ENCODE measurements at regions of chr16 and their contacts with region 1.

Region 1: GRCh38 chr16:68264128-68265077 is at the start of gene SLC7A6:
- DNase-seq: peak; percentile 78 to 90 (median 84)
- ATAC-seq: peak; percentile 21 to 80 (median 69)
- H3K4me3 ChIP-seq: peak within 1 kb of the TSS; percentile 53 to 97 (median 90)
- H3K27ac ChIP-seq: peak within 1 kb of the TSS; percentile 86 to 100 (median 98)
- H3K4me1 ChIP-seq: peaks cover 0 to 74% (median 45%) of the 10 kb centered on the region in 12 donors
- H3K27me3 ChIP-seq: no peaks in the 10 kb centered on the region
- CTCF ChIP-seq: peak; percentile 57 to 90 (median 76)
- POLR2A ChIP-seq: peak; percentile 73 to 86
- total RNA-seq, gene SLC7A6: 32.7 to 76.0 (median 45.1) TPM

Region 2: GRCh38 chr16:68166264-68166663 is 98.1 kb before region 1 on chr16:
- intact Hi-C with region 1: no loop called
- DNase-seq: no peak
- ATAC-seq: no peak
- H3K4me3 ChIP-seq: no peak overlapping the region
- H3K27ac ChIP-seq: no peak overlapping the region
- H3K4me1 ChIP-seq: peaks cover 0 to 7% (median 0%) of the 10 kb centered on the region in 12 donors
- H3K27me3 ChIP-seq: no peaks in the 10 kb centered on the region
- CTCF ChIP-seq: no peak
- POLR2A ChIP-seq: no peak

Region 3: GRCh38 chr16:68244903-68245853 is 19.2 kb before region 1 on chr16 and contains the start of gene PLA2G15:
- intact Hi-C with region 1: loop called in 1 of 10 experiments (anchors 1 kb)
- DNase-seq: peak; percentile 98 to 99 (median 98)
- ATAC-seq: peak; percentile 91 to 97 (median 96)
- H3K4me3 ChIP-seq: peak within 1 kb of the TSS; percentile 65 to 98 (median 86)
- H3K27ac ChIP-seq: peak within 1 kb of the TSS in 11 of 12 donors; percentile 75 to 97 (median 87)
- H3K4me1 ChIP-seq: peaks cover 4 to 55% (median 47%) of the 10 kb centered on the region in 12 donors
- H3K27me3 ChIP-seq: no peaks in the 10 kb centered on the region
- CTCF ChIP-seq: peak in 1 of 12 donors; percentile 17
- POLR2A ChIP-seq: peak; percentile 78 to 94
- total RNA-seq, gene PLA2G15: 27.3 to 68.0 (median 45.4) TPM

Region 4: GRCh38 chr16:68284847-68285246 is 20.4 kb after region 1 on chr16:
- intact Hi-C with region 1: loop called in 2 of 10 experiments (anchors 1 kb)
- DNase-seq: no peak
- ATAC-seq: no peak
- H3K4me3 ChIP-seq: peak overlapping the region in 1 of 12 donors; percentile 25
- H3K27ac ChIP-seq: peak overlapping the region; percentile 72 to 95 (median 84)
- H3K4me1 ChIP-seq: peaks cover 26 to 100% (median 78%) of the 10 kb centered on the region in 12 donors
- H3K27me3 ChIP-seq: no peaks in the 10 kb centered on the region
- CTCF ChIP-seq: no peak
- POLR2A ChIP-seq: no peak

Region 5: DNA sequence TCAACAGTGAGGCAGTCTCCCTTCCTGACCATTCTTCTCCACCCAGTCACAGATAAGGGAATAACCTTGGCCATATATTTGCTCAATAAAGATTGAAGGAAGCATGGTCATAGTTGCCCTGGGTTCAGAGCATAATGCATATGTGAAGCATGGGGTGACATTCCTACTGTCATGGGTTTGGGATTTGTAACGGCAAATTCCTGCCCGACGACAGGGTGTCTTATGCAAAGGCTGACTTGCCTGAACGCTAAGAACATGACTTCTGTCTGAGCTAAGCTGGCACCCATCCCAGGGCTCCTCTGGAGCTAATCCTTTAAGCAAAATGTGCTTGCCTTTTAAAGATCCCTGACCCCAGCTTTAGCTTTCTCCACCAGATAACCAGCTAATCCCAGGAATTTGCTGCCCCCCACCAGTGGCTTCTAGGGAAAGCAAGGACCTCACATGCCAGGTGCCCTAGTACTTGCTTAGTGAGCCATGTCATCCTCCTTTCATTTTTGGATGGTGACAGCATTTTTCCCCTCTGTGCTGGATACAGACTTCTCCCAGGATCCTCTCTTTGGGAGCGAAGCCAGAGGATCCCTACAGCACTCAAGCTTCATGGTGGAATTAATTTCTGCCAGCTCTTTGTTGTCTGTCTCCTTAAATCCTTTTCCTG is 34.6 kb after region 1 on chr16:
- intact Hi-C with region 1: loop called in 3 of 10 experiments (anchors 5 kb)
- DNase-seq: peak in 4 of 5 donors; percentile 44 to 79 (median 68)
- ATAC-seq: peak; percentile 40 to 73 (median 54)
- H3K4me3 ChIP-seq: no peak overlapping the region
- H3K27ac ChIP-seq: peak overlapping the region in 11 of 12 donors; percentile 42 to 91 (median 66)
- H3K4me1 ChIP-seq: peaks cover 0 to 54% (median 25%) of the 10 kb centered on the region in 12 donors
- H3K27me3 ChIP-seq: no peaks in the 10 kb centered on the region
- CTCF ChIP-seq: no peak
- POLR2A ChIP-seq: no peak

Region 6: GRCh38 chr16:68310761-68311511 is 46.5 kb after region 1 on chr16 and contains the starts of genes PRMT7 and SLC7A6OS:
- intact Hi-C with region 1: loop called (anchors 1 to 5 kb)
- DNase-seq: peak; percentile 91 to 94 (median 93)
- ATAC-seq: peak; percentile 100
- H3K4me3 ChIP-seq: peak within 1 kb of the TSS; percentile 69 to 98 (median 89)
- H3K27ac ChIP-seq: peak within 1 kb of the TSS; percentile 15 to 95 (median 83)
- H3K4me1 ChIP-seq: peaks cover 6 to 37% (median 26%) of the 10 kb centered on the region in 12 donors
- H3K27me3 ChIP-seq: no peaks in the 10 kb centered on the region
- CTCF ChIP-seq: peak in 7 of 12 donors; percentile 27 to 64 (median 39)
- POLR2A ChIP-seq: peak in 1 of 2 donors; percentile 76
- total RNA-seq, gene PRMT7: 21.9 to 34.0 (median 30.7) TPM
- total RNA-seq, gene SLC7A6OS: 8.1 to 16.2 (median 11.2) TPM

Region 7: DNA sequence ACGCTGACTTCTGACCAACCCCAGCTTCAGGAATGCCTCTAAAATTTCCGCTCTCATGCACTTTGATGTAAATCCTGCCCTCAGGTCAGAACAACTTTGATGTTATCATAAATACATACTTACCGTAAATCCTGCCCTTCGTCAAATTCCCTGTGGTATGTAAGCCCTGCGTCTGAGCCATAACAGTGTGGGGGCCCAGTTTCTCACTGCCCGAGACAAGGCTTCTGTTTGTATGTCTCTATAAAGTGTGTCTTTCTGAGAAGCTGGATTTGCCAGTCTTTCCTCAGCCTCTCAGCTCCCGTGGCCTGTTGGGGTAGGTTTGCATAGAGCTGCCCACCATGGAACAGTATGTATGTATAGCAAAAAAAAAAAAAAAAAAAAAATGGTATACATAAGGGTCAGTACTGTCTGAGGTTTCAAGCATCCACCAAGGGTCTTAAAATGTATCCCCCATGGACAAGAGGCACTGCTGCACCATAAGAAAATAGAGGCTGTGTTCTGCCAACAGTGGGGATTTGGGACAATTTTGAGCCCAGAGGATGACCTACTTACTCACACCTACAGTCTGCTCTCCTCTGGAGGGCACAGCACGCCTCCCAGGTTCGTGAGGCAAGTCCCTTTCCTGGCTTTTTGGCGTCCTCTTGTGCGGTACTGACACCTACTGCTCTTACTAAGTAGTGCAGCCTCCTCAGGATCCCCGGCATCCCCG is 63.9 kb after region 1 on chr16:
- intact Hi-C with region 1: loop called (anchors 1 to 5 kb)
- DNase-seq: peak; percentile 76 to 84 (median 81)
- ATAC-seq: peak; percentile 85 to 95 (median 94)
- H3K4me3 ChIP-seq: no peak overlapping the region
- H3K27ac ChIP-seq: no peak overlapping the region
- H3K4me1 ChIP-seq: peaks cover 0 to 27% (median 7%) of the 10 kb centered on the region in 12 donors
- H3K27me3 ChIP-seq: no peaks in the 10 kb centered on the region
- CTCF ChIP-seq: peak; percentile 85 to 97 (median 92)
- POLR2A ChIP-seq: no peak